Activated CD8-positive, alpha-beta T cell treated with anti-CD3 and anti-CD28 coated beads, Interleukin-2, amount 10 ng/mL, durations not matched to agents 7 days and 5 days (primary cell): ENCODE measurements at regions of chr16 and their contacts with region 1.

Region 1: DNA sequence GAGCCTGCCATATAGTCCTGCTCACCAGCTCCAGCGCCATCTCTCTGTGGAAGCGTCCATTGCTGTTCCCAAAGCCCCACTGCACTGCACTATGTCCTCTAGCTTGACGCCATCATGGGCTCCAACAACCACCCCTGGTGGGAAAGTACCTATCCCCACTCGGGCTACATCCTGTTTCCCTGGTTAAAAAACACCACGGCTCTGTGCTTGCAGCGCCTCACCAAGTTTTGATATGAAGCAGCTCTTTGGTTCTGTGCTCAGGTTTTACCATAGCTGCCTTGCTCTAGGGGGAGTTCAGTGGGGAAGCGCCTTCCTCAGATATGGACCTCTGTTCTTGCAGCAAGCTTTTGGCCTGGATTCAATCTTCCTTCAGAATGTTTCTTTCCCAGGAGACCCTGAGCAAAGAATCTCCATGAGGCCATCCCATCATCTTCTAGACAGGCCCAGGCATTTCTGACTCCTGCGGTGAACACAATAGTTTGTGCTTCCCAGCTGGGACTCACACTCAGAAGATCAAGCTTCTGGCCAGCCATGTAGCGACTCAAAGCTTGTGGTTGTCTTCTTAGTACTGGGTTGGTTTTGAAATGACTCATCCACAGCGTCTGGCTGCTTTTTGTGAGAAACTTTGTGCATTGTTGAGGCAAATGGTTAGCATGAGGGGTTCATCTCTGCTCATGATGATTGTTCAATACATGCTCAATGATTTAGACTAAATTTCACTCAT is 39.5 kb downstream of the DYNLRB2 start:
- DNase-seq: peak; percentile 88
- ATAC-seq: peak; percentile 86
- H3K4me3 Mint-ChIP-seq: peak overlapping the region; percentile 57
- H3K27ac Mint-ChIP-seq: peak overlapping the region; percentile 92
- H3K4me1 Mint-ChIP-seq: peaks cover 68% of the 10 kb centered on the region
- H3K27me3 Mint-ChIP-seq: peaks cover 2% of the 10 kb centered on the region

Region 2: DNA sequence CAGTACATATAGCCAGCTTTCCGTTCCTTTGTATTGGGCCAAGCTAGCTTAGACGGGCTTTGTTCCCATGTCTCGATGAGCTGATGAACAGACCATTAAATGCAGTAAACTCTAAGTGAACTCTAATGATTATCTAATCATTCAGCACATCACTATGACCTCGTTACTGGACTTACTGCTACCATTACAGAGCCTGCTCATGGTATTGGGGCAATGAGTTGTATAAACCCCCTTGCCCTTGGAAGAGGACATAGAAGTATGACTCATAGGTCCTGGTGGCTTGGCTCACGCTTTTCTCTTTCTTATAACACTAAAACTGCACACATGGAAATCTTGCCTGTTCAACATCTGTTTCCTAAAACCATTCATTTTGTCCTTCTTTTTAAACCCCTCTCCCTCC is 133.0 kb before region 1 on chr16:
- CTCF ChIA-PET with region 1: no interaction called
- POLR2A ChIA-PET with region 1: no interaction called
- DNase-seq: no peak
- ATAC-seq: no peak
- H3K4me3 Mint-ChIP-seq: no peak overlapping the region
- H3K27ac Mint-ChIP-seq: no peak overlapping the region
- H3K4me1 Mint-ChIP-seq: no peaks in the 10 kb centered on the region
- H3K27me3 Mint-ChIP-seq: no peaks in the 10 kb centered on the region

Region 3: GRCh38 chr16:80540516-80541272 is 39.6 kb before region 1 on chr16 and contains the start of gene DYNLRB2:
- CTCF ChIA-PET with region 1: interaction called, 13 read pairs
- POLR2A ChIA-PET with region 1: interaction called, 7 read pairs
- DNase-seq: peak; percentile 94
- ATAC-seq: peak; percentile 96
- H3K4me3 Mint-ChIP-seq: peak within 1 kb of the TSS; percentile 92
- H3K27ac Mint-ChIP-seq: peak within 1 kb of the TSS; percentile 96
- H3K4me1 Mint-ChIP-seq: peaks cover 18% of the 10 kb centered on the region
- H3K27me3 Mint-ChIP-seq: peaks cover 7% of the 10 kb centered on the region
- total RNA-seq, gene DYNLRB2: not detected

Region 4: DNA sequence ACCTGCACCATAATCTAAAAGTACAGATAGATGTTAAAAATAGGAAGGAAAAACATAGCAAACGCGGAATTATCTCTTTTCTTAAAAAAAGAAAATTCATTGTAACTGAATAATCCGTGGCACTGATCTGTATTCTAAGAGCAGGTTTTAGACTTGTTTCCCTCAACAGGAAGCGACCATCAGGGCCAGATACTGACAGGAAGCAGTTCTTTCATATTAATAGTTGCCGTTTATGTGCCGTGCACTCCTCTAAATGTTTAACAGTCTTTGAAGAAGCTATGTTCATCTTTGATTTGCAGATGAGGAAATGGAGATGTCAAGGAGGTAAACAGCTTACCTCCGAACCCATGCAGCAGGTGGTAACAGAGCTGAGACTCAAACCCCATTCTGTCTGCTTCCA is 15.9 kb before region 1 on chr16:
- CTCF ChIA-PET with region 1: interaction called, 13 read pairs
- POLR2A ChIA-PET with region 1: interaction called, 4 read pairs
- DNase-seq: peak; percentile 42
- ATAC-seq: peak; percentile 60
- H3K4me3 Mint-ChIP-seq: no peak overlapping the region
- H3K27ac Mint-ChIP-seq: peak overlapping the region; percentile 56
- H3K4me1 Mint-ChIP-seq: peaks cover 36% of the 10 kb centered on the region
- H3K27me3 Mint-ChIP-seq: peaks cover 3% of the 10 kb centered on the region

Region 5: DNA sequence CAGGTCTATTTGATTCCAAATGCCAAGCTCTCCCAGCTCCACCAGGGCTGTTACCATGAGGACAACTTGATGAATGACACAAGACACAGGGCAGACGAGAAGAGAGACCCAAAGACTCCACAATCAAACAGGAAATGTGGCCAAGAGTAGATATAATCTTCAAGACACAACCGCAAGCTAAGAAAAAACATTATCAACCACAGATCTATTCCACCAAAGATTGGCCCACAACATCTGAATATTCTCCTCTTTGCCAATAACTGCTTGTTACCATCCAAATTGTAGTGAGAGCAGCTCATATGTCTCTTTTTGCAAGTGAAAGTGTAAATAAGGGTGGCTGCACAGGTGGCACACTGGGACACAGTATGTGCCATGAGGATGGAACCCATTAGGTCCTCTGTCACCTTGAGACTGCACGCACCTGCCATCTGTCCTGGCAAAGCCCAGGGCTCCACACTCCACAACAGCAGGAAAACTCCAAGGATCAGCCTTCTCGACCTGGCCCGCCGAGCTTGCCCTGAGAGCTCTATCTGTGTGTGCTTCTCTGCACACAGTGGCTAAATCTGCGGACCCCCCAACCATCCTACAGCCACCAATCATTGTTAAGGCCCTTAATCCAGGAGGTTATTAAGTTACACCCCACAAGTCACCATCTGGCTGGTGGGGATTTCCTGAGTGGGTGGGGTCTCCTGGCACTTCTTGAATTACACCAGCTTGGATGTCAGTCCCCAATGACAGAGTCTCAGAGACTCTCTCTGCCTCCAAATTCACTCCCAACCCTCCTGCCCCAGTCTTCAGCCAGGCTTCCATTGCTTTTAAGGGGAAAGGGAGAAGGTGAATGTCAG is 11.0 kb after region 1 on chr16:
- CTCF ChIA-PET with region 1: interaction called, 46 read pairs
- POLR2A ChIA-PET with region 1: interaction called, 39 read pairs
- DNase-seq: peak; percentile 67
- ATAC-seq: peak; percentile 95
- H3K4me3 Mint-ChIP-seq: peak overlapping the region; percentile 26
- H3K27ac Mint-ChIP-seq: peak overlapping the region; percentile 58
- H3K4me1 Mint-ChIP-seq: peaks cover 34% of the 10 kb centered on the region
- H3K27me3 Mint-ChIP-seq: peaks cover 51% of the 10 kb centered on the region

Region 6: GRCh38 chr16:80824718-80825364 is 244.6 kb after region 1 on chr16:
- CTCF ChIA-PET with region 1: interaction called, 18 read pairs
- POLR2A ChIA-PET with region 1: no interaction called
- DNase-seq: peak; percentile 67
- ATAC-seq: no peak
- H3K4me3 Mint-ChIP-seq: no peak overlapping the region
- H3K27ac Mint-ChIP-seq: no peak overlapping the region
- H3K4me1 Mint-ChIP-seq: no peaks in the 10 kb centered on the region
- H3K27me3 Mint-ChIP-seq: peaks cover 21% of the 10 kb centered on the region